Dendritic cell treated with granulocyte-macrophage colony-stimulating factor and Interleukin-4, amounts not matched to agents 40 ng/mL and 50 ng/mL, for 4 days (primary cell): ENCODE measurements at regions of chr10 and their contacts with region 1.

Region 1: DNA sequence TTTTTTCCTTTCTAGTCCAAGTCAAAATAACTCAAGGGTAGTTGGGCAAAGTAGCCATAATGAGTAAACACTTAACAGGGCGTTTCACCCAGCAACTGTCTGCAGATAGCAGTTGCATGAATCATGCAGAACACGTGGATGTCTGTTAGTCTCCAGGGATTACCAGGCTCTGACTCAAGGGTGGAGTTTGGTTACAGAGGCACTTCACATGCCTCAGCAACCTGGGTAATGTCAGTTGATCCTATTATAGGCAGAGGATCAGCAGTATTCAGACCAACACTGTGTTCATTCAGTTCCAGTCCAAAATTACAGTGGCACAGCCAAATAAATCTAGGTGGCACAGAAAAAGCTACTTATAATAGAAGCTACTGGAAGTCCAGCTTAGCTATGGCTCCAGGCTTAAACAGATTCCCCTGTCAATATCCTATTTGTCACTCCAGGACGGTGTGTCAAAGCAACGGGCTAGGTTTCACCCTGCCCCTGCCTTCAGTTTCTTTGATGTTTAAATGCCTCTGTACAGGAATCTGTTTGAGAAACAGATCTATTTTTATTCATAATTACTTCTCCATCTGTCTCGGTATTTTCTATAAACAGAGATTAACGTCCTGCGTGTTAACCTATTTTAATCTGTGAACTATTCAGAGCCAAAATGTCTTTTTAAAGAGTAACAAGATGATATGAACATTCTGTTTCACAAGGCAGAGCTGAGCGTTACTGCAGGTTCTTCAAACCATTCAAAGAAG is 162.7 kb upstream of the AKR1E2 start:
- H3K4me3 Mint-ChIP-seq: no peak overlapping the region
- H3K27ac Mint-ChIP-seq: no peak overlapping the region
- H3K4me1 Mint-ChIP-seq: no peaks in the 10 kb centered on the region
- H3K27me3 Mint-ChIP-seq: peaks cover 14% of the 10 kb centered on the region

Region 2: DNA sequence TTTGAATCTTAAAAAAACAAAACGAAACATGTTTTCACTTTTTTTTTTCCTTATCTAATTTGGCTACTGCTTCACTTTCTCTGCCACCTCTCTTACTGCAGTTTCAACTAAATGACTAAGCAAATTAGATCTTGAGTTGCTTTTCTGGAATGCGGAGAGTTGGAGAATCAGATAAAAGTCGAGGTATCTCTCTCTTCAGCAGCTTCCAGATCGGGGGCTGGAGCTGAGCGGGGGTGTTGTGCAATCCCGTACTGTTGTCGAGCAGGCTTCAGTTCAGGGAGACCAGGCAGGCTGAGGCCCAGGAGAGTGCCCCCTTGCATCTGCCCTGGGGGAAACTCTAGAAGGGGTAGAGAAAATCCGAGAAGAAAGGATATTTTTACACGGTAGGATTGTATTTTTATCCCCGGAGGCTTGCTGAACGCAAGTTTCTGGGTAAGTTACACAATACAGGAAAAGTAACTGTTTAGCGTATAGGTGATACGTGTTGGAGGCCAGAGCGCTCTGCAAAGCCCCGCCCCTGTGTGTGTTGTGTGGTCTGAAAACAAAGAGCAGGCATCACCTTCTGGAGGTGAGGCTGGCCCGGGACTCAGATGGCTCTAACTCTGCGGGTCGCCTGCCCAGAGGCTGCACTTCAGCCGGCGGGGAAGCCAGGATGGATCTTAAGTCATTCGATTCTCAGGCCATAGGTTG is 994.9 kb before region 1 on chr10:
- intact Hi-C with region 1: no loop called
- H3K4me3 Mint-ChIP-seq: peak overlapping the region; percentile 62
- H3K27ac Mint-ChIP-seq: peak overlapping the region; percentile 69
- H3K4me1 Mint-ChIP-seq: peaks cover 37% of the 10 kb centered on the region
- H3K27me3 Mint-ChIP-seq: peaks cover 18% of the 10 kb centered on the region

Region 3: DNA sequence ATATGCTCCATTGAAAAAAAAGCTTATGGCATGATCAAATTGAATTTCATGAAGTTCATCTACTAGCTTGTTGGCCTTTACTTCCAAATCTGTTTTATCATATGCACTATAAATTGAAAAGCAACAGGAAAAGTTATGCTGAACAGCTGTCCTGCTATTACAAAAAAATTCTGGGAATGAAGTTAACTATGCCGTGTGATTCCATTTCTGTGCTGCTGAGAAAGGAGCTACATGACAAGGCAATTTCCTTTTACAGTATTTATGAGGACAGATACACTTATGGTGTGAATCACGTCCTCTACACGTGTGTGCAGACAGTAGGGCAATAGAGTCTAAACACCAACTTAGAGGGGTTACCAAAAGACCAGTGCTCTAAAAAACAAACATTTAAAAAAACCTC is 263.8 kb before region 1 on chr10:
- intact Hi-C with region 1: loop called (anchors 5 kb)
- H3K4me3 Mint-ChIP-seq: no peak overlapping the region
- H3K27ac Mint-ChIP-seq: no peak overlapping the region
- H3K4me1 Mint-ChIP-seq: no peaks in the 10 kb centered on the region
- H3K27me3 Mint-ChIP-seq: peaks cover 7% of the 10 kb centered on the region

Region 4: GRCh38 chr10:4804465-4804864 is 141.1 kb after region 1 on chr10:
- intact Hi-C with region 1: no loop called
- H3K4me3 Mint-ChIP-seq: no peak overlapping the region
- H3K27ac Mint-ChIP-seq: no peak overlapping the region
- H3K4me1 Mint-ChIP-seq: peaks cover 5% of the 10 kb centered on the region
- H3K27me3 Mint-ChIP-seq: peaks cover 5% of the 10 kb centered on the region